ENCODE measurements at regions of chrX and their contacts with region 1.

Region 1: GRCh38 chrX:134484039-134484438 is 24.1 kb downstream of the HPRT1 start:
- DNase-seq: no peak
- ATAC-seq: peak; percentile 51
- H3K4me3 ChIP-seq: no peak overlapping the region
- H3K4me1 ChIP-seq: no peaks in the 10 kb centered on the region
- CTCF ChIP-seq: peak; percentile 25

Region 2: GRCh38 chrX:134782796-134783195 is 298.8 kb after region 1 on chrX:
- intact Hi-C with region 1: loop called in 1 of 2 experiments (anchors 10 kb)
- DNase-seq: no peak
- ATAC-seq: no peak
- H3K4me3 ChIP-seq: no peak overlapping the region
- H3K4me1 ChIP-seq: no peaks in the 10 kb centered on the region
- CTCF ChIP-seq: no peak

Measured in mucosa of descending colon (tissue), 3 donors.